Posterior cingulate gyrus (tissue), 11 donors: ENCODE measurements at regions of chr11 and their contacts with region 1.

Region 1: DNA sequence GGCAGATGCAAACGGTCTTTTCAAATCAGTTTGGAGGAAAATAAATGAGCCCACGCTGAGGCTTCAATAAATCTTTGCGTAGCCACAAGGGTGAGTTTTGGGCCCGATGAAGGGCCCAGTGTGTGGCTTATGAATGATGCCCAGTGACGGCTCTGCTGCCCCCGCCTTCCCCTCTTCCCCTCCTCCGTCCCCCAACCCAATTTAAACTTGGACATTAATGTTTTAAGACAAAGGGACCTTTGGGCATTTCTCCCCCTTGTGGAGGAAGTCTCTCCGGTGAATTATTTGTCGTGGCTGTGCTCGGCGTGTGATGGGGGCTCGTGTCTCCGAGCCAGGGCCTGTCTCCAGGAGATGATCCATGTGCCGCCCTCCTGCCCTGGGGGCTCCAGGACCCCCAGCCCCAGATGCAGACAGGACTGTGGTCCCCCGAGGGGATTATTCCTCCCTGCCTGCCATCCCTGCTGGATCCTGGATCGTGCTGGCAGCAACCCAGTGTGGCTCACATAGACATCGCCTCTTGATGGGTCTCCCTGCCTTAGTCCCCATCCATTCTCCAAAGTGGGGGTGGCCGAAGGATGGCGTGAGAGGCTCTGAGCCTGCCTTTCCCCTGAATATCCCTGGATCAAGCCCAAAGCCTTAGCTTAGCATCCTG is 56.3 kb downstream of the SMIM38 start:
- DNase-seq: peak in 2 of 10 donors; percentile 54 to 67

Region 2: DNA sequence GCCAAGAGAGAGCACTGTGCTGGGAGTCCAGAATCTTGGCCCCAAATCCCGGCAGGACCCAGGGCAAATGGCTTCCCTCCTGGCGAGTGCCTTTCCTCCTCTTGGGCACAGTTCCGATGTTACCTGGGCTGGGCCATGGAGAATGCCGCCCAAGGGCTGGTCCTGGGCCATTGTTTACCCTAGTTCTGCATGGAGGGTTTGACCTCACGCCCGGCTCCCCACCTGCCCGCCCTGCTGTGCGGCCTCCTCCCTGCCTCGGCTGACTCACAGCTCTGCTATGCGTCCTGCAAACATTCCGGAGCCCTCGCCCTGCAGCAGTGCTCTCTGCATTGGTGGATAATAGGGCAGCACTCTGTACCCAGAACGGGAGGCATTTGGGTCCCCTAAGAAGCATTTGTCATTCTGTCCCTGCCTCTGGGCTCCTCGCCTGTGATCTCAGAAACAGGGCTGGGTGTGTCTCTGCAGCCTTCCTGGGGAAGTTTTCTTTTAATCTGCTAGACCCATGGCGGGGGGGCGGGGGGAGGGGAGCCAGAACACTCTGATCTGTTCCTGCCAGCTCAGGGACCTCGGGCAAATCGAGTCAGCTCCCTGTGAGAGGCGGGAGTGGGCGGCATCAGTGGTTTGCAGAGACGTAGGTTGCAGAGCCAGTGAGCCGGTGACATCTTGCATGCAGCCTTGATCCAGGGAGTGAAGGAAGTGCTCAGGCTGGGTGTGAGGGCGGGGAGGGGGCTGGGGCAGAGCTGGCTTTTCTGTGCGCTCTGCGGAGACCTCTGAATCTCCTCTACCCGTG is 89.2 kb before region 1 on chr11:
- intact Hi-C with region 1: loop called (anchors 10 kb)
- DNase-seq: peak in 3 of 10 donors; percentile 71 to 84 (median 73)

Region 3: GRCh38 chr11:69157156-69157821 is 54.8 kb before region 1 on chr11:
- intact Hi-C with region 1: loop called (anchors 5 kb)
- DNase-seq: peak; percentile 71 to 98 (median 85)